ENCODE measurements at regions of chr18 and their contacts with region 1.

Region 1: GRCh38 chr18:50895350-50896045 is 16.6 kb downstream of the ME2 start:
- DNase-seq: no peak
- ATAC-seq: no peak
- H3K4me3 ChIP-seq: no peak overlapping the region
- H3K27ac ChIP-seq: no peak overlapping the region
- H3K4me1 ChIP-seq: no peaks in the 10 kb centered on the region
- H3K27me3 ChIP-seq: no peaks in the 10 kb centered on the region
- CTCF ChIP-seq: no peak

Region 2: GRCh38 chr18:50917021-50917420 is 21.5 kb after region 1 on chr18:
- intact Hi-C with region 1: loop called in 1 of 2 experiments (anchors 1 kb)
- DNase-seq: no peak
- ATAC-seq: no peak
- H3K4me3 ChIP-seq: no peak overlapping the region
- H3K27ac ChIP-seq: no peak overlapping the region
- H3K4me1 ChIP-seq: no peaks in the 10 kb centered on the region
- H3K27me3 ChIP-seq: no peaks in the 10 kb centered on the region
- CTCF ChIP-seq: no peak